HCT116 (cell line): ENCODE measurements at regions of chr3 and their contacts with region 1.

Region 1: GRCh38 chr3:159252772-159253384 is 451.0 kb downstream of the MFSD1 start:
- DNase-seq: peak; percentile 70
- ATAC-seq: peak; percentile 55; the same call in 1 of the 2 replicates
- H3K4me3 ChIP-seq: no peak overlapping the region
- H3K27ac ChIP-seq: no peak overlapping the region
- H3K4me1 ChIP-seq: no peaks in the 10 kb centered on the region
- H3K27me3 ChIP-seq: no peaks in the 10 kb centered on the region
- CTCF ChIP-seq: peak; percentile 66 to 90 (median 88)
- POLR2A ChIP-seq: no peak
- RAD21 ChIP-seq: peak; percentile 94

Region 2: GRCh38 chr3:158539414-158540014 is 713.4 kb before region 1 on chr3:
- CTCF ChIA-PET with region 1: no interaction called
- POLR2A ChIA-PET with region 1: no interaction called
- RAD21 ChIA-PET with region 1: no interaction called
- intact Hi-C with region 1: loop called (anchors 10 kb)
- DNase-seq: peak; percentile 42
- ATAC-seq: peak; percentile 70
- H3K4me3 ChIP-seq: no peak overlapping the region
- H3K27ac ChIP-seq: no peak overlapping the region
- H3K4me1 ChIP-seq: no peaks in the 10 kb centered on the region
- H3K27me3 ChIP-seq: no peaks in the 10 kb centered on the region
- CTCF ChIP-seq: peak; percentile 49 to 75 (median 49); a peak in 5 of 6 replicates
- POLR2A ChIP-seq: no peak
- RAD21 ChIP-seq: peak; percentile 56

Region 3: GRCh38 chr3:158644345-158644908 is 608.5 kb before region 1 on chr3 and contains the start of gene GFM1:
- CTCF ChIA-PET with region 1: no interaction called
- POLR2A ChIA-PET with region 1: no interaction called
- RAD21 ChIA-PET with region 1: no interaction called
- intact Hi-C with region 1: loop called (anchors 10 kb)
- DNase-seq: peak; percentile 93
- ATAC-seq: peak; percentile 97
- H3K4me3 ChIP-seq: peak within 1 kb of the TSS; percentile 86 to 91
- H3K27ac ChIP-seq: peak within 1 kb of the TSS; percentile 65
- H3K4me1 ChIP-seq: peaks cover 7 to 16% of the 10 kb centered on the region in 2 experiments; a peak in 3 of 4 replicates
- H3K27me3 ChIP-seq: no peaks in the 10 kb centered on the region
- CTCF ChIP-seq: peak; percentile 71 to 79 (median 78)
- POLR2A ChIP-seq: no peak
- RAD21 ChIP-seq: peak; percentile 56
- total RNA-seq, gene GFM1: 38.7 TPM

Region 4: DNA sequence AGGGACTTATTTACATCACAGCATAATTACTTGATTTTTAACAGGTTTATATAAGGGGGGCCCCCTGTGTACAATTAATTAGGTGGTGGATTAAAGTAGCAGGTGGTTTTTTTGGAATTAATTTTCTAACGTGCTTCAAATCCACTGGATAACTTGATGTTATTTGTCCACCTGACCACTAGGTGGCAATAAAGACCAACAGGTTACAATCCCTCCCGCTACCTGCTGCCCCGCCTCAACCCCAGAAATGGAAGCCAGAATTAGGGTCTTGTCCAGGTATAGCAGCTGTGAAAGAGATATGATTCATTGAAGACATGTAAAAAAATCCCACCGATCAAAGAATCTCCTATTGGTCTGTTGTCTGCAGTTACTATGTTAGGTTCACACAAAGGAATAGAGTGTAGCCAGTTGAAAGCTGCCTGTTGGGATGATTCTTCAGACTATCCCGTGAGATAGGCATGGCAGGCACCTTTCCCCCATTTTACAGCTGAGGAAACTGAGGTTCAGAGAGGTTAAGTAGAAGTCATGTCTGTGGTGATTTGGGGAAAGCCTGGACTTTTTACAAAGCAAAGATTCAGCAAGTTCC is 407.0 kb before region 1 on chr3:
- CTCF ChIA-PET with region 1: interaction called, 22 read pairs
- POLR2A ChIA-PET with region 1: no interaction called
- RAD21 ChIA-PET with region 1: no interaction called
- intact Hi-C with region 1: loop called (anchors 2 kb)
- DNase-seq: peak; percentile 27
- ATAC-seq: peak; percentile 85
- H3K4me3 ChIP-seq: no peak overlapping the region
- H3K27ac ChIP-seq: no peak overlapping the region
- H3K4me1 ChIP-seq: no peaks in the 10 kb centered on the region
- H3K27me3 ChIP-seq: no peaks in the 10 kb centered on the region
- CTCF ChIP-seq: peak; percentile 58 to 77 (median 68); a peak in 4 of 6 replicates
- POLR2A ChIP-seq: no peak
- RAD21 ChIP-seq: peak; percentile 87

Region 5: GRCh38 chr3:158918008-158918407 is 334.9 kb before region 1 on chr3:
- CTCF ChIA-PET with region 1: interaction called, 14 read pairs
- POLR2A ChIA-PET with region 1: no interaction called
- RAD21 ChIA-PET with region 1: no interaction called
- intact Hi-C with region 1: loop called (anchors 1 kb)
- DNase-seq: peak; percentile 52
- ATAC-seq: peak; percentile 97
- H3K4me3 ChIP-seq: no peak overlapping the region
- H3K27ac ChIP-seq: no peak overlapping the region
- H3K4me1 ChIP-seq: peaks cover 0 to 7% of the 10 kb centered on the region in 2 experiments; a peak in 2 of 4 replicates
- H3K27me3 ChIP-seq: no peaks in the 10 kb centered on the region
- CTCF ChIP-seq: peak; percentile 66 to 84 (median 79); a peak in 5 of 6 replicates
- POLR2A ChIP-seq: no peak
- RAD21 ChIP-seq: peak; percentile 76

Region 6: DNA sequence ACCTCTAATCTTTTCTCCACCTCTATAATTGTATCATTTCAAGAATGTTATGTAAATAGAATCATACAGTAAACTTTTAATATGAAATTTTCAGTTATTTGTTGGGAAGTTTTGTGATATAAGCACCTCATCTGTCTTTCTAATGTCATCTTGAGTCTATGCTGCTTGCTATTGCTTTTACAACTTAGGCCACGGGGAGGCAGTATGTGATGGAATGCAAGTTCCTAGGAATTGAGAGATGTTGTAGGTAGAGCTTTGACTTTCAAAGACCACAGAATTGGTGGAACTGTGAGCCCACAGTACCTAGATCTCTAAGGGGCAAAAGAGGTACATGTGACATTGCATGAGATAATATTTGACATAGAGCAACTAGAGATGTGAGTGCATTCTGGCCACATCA is 122.8 kb before region 1 on chr3:
- CTCF ChIA-PET with region 1: interaction called, 4 read pairs
- POLR2A ChIA-PET with region 1: no interaction called
- RAD21 ChIA-PET with region 1: no interaction called
- intact Hi-C with region 1: loop called (anchors 1 kb)
- DNase-seq: peak; percentile 15
- ATAC-seq: peak; percentile 70
- H3K4me3 ChIP-seq: no peak overlapping the region
- H3K27ac ChIP-seq: no peak overlapping the region
- H3K4me1 ChIP-seq: peaks cover 0 to 3% of the 10 kb centered on the region in 2 experiments; a peak in 1 of 4 replicates
- H3K27me3 ChIP-seq: no peaks in the 10 kb centered on the region
- CTCF ChIP-seq: peak; percentile 34 to 75 (median 64); a peak in 5 of 6 replicates
- POLR2A ChIP-seq: no peak
- RAD21 ChIP-seq: peak; percentile 53

Region 7: GRCh38 chr3:159263750-159264553 is 11.1 kb after region 1 on chr3:
- CTCF ChIA-PET with region 1: no interaction called
- POLR2A ChIA-PET with region 1: no interaction called
- RAD21 ChIA-PET with region 1: no interaction called
- intact Hi-C with region 1: no loop called
- DNase-seq: peak; percentile 31
- ATAC-seq: peak; percentile 72
- H3K4me3 ChIP-seq: no peak overlapping the region
- H3K27ac ChIP-seq: no peak overlapping the region
- H3K4me1 ChIP-seq: no peaks in the 10 kb centered on the region
- H3K27me3 ChIP-seq: 0 out of 2 replicates have a peak, but pooled peaks cover 6% of the 10 kb centered on the region
- CTCF ChIP-seq: peak; percentile 70 to 84 (median 73)
- POLR2A ChIP-seq: no peak
- RAD21 ChIP-seq: peak; percentile 91